GM23248 (cell line): ENCODE measurements at regions of chr3 and their contacts with region 1.

Region 1: DNA sequence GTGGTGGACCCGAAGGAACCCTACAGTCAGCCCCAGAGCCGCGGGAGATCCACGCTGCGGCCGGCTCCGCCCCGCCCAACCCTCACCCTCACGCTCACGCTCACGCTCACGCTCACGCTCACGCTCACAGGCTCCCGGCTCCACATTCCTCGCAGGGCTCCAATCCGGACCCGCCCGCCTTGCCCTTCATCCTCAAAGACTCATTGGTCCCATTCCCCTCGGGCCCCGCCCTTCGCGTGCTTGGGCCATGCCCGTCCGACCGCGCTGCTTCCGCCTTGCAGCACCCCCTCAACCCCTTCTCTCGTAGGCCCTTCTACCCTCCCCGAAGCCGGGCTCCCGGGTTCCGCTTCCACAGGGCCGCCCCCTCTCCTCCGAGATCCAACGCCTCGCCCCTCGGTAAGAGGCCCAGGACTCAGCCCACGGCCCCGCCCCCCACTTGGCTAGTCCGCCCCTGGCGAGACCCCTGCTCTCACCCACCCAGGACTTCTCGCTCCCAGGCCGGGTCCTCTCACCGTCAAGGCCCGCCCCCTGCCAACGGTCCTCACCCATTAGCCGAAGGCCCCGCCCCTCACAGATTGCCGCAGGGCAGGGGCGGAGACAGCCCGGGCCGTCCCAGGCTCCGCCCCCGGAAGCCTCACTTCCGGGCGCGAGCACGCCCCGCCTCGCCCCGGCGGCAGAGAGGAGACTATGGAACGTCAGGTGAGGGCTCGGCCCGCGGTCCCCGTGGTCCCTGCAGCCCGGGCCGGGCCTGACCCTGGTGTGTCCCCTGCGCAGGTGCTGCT is at the start of gene APEH:
- DNase-seq: peak; percentile 99
- H3K4me3 ChIP-seq: peak within 1 kb of the TSS; percentile 81
- H3K27ac ChIP-seq: peak within 1 kb of the TSS; percentile 87
- H3K4me1 ChIP-seq: peaks cover 11% of the 10 kb centered on the region
- H3K27me3 ChIP-seq: no peaks in the 10 kb centered on the region
- total RNA-seq, gene APEH: 108 and 126 TPM in 2 replicates

Region 2: DNA sequence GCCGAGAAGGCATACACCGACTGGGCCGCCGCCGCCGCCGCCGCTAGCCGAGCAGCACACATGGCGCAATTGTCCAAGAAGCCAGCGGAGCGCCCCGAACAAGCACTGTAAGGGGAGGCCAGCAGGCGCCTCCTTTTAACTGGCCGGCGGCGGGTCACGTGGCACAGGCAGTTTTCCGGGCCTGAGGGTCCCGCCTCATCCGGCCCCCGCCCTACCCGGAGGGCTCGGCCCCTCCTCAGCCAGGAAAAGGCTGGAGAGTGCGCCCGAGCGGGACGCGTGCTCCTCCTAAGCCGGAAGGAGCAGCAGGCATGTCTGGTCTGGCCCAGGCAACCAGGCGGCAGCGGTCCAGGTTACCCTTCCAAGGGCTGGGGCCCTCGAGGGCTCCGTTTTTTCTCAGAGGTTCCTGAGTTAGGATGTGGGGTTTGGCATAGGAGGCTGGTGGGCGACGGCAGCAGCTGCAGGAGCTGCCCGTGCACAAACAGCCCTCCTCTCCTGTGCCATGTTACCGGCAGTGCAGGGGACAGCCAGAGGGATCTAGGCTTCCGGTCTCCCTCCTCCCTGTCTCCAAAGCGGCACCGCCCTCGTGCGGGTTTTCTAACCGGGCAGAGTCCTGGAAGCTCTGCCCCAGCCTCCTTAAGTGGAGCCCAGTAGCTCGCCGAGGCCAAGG is 315.6 kb before region 1 on chr3 and contains the start of gene GPX1:
- in situ Hi-C with region 1: no loop called
- DNase-seq: peak; percentile 95
- H3K4me3 ChIP-seq: peak within 1 kb of the TSS; percentile 76
- H3K27ac ChIP-seq: peak within 1 kb of the TSS; percentile 83
- H3K4me1 ChIP-seq: peaks cover 46% of the 10 kb centered on the region
- H3K27me3 ChIP-seq: no peaks in the 10 kb centered on the region
- total RNA-seq, gene GPX1: 201 and 229 TPM in 2 replicates

Region 3: DNA sequence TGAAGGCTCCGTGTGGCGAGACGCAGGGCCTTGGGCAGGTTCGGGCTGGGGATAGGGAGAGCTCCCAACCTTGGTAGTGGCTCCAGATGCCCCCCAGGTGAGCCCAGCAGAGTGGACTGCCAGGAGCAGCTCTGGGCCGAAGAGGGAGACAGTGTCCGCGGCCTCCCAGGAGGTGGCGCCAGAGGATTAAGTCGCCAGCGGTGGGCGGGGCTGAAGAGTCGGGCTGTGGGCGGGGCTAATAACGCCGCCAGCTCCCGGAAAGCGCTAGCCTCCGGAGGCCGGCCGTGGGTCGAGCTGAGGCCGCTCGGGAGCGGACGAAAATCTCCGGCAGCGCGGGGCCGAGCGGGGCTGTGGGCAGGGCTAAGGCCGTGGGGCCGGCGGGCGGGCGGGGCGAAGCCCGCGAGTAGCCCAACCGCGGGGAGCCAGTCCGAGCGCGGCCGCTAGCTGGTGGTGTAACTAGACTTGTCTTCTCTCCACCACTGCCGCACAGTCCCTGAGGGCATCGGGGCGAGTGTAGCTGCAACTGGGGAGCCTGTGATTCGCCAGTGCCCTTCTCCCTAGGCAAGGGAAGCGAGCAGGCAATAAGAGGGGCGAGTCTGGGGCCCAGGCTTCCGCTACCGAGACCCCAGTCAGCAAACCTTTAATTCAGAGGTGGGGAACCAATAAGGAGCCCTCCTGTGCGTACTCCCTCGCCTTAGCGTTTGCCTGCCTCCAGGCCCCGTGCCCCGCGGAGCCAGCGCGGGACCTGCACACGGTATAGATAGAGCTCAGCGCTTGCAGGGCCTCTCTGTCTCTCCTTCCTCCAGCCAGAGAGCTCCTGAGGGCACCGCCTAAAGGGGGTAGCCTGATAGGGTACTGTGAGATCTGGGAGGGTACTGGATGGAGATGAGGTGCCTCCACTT is 134.0 kb before region 1 on chr3:
- in situ Hi-C with region 1: loop called (anchors 10 kb)
- DNase-seq: peak; percentile 98
- H3K4me3 ChIP-seq: peak overlapping the region; percentile 65
- H3K27ac ChIP-seq: peak overlapping the region; percentile 10; the same call in 1 of the 2 replicates
- H3K4me1 ChIP-seq: peaks cover 7% of the 10 kb centered on the region; the same call in 1 of the 2 replicates
- H3K27me3 ChIP-seq: 0 out of 2 replicates have a peak, but pooled peaks cover 12% of the 10 kb centered on the region